ENCODE measurements at regions of chr11 and their contacts with region 1.

Region 1: DNA sequence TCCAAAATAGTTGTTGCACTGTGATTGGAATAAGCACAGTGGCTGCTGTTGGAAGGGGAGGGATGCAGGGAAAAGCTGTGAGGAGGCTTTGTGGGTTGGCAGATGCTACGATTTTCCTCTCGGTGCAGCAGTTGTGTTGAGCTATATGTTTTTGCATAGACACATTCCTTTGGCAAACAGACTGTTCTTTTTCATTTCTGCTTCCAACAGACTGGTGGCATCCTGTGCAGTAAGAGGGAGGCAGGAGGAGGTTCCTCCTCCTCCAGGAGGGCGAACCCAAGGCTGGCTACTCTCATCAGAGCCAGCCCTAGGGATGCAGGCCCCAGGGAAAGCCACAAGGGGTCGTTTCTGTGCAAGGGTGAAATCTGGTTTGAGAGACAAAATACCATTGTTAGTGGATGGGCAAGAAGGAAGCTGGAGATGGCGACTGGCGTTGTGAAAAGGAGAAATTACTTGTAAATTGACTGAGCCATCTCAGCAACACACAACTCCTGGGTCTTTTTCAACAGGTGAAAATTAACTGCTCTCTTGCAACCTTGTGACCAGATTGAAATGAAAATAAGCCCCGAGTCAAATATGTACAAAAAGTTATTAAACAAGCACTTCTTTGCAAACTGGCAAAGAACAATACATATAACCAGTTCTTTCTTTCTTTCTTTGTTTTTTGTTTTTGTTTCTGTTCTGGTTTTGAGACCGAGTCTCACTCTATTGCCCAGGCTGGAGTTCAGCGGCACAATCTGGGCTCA is 26.5 kb upstream of the UBASH3B start:
- DNase-seq: peak; percentile 51 to 84 (median 76)
- H3K4me3 ChIP-seq: peak overlapping the region in 12 of 59 donors; percentile 3 to 38 (median 14)
- H3K27ac ChIP-seq: peak overlapping the region in 52 of 59 donors; percentile 1 to 82 (median 63)
- H3K27me3 ChIP-seq: no peaks in the 10 kb centered on the region
- CTCF ChIP-seq: peak; percentile 51 to 92 (median 82)

Region 2: GRCh38 chr11:122578168-122578825 is 50.7 kb before region 1 on chr11:
- intact Hi-C with region 1: loop called in 1 of 2 experiments (anchors 2 kb)
- DNase-seq: no peak
- H3K4me3 ChIP-seq: no peak overlapping the region
- H3K27ac ChIP-seq: no peak overlapping the region
- H3K27me3 ChIP-seq: no peaks in the 10 kb centered on the region
- CTCF ChIP-seq: no peak

Region 3: DNA sequence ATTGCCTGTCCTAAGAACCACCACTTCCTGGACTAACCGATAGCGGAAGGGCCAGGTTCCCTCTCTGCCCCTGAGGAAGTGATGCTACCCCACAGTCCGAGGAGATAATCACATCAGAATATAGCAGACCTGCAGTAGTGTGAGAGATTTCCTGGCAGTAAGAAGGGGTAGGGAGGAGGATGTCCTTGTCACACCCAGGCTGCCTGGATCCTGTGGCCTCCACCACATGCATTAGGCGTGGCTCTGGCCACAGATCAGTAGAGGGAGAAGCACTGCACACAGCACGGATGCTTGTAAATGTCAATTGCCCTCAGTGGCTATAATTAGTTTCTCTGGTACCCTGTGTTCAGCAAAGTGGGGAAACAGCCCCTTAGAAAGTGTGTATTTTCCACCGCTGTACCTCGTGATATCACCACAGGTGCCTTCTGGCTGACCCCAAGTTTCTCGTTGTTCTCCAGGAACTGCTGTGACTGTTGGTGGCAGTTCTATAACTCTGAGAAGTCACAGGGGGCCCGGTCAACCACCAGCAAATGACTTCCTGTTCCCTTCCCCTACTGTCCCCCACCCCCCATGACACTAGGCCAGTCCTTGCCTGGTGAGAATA is 88.4 kb after region 1 on chr11:
- intact Hi-C with region 1: no loop called
- DNase-seq: no peak
- H3K4me3 ChIP-seq: no peak overlapping the region
- H3K27ac ChIP-seq: peak overlapping the region in 7 of 59 donors; percentile 3 to 49 (median 13)
- H3K27me3 ChIP-seq: no peaks in the 10 kb centered on the region
- CTCF ChIP-seq: no peak

Region 4: GRCh38 chr11:122781378-122782195 is 152.6 kb after region 1 on chr11:
- intact Hi-C with region 1: loop called (anchors 1 to 5 kb)
- DNase-seq: peak; percentile 77 to 93 (median 88)
- H3K4me3 ChIP-seq: no peak overlapping the region
- H3K27ac ChIP-seq: peak overlapping the region in 5 of 59 donors; percentile 12 to 95 (median 20)
- H3K27me3 ChIP-seq: no peaks in the 10 kb centered on the region
- CTCF ChIP-seq: peak; percentile 86 to 99 (median 95)

Region 5: GRCh38 chr11:122853971-122854446 is 225.0 kb after region 1 on chr11:
- intact Hi-C with region 1: loop called (anchors 2 to 5 kb)
- DNase-seq: peak in 2 of 10 donors; percentile 52 to 68
- H3K4me3 ChIP-seq: peak overlapping the region in 1 of 59 donors; percentile 13
- H3K27ac ChIP-seq: peak overlapping the region in 1 of 59 donors; percentile 88
- H3K27me3 ChIP-seq: peaks cover 0 to under 1% (median 0%) of the 10 kb centered on the region in 45 donors
- CTCF ChIP-seq: peak; percentile 64 to 93 (median 81)

Measured in dorsolateral prefrontal cortex (tissue), 120 donors.